HEK293T (cell line): ENCODE measurements at regions of chr11 and their contacts with region 1.

Region 1: DNA sequence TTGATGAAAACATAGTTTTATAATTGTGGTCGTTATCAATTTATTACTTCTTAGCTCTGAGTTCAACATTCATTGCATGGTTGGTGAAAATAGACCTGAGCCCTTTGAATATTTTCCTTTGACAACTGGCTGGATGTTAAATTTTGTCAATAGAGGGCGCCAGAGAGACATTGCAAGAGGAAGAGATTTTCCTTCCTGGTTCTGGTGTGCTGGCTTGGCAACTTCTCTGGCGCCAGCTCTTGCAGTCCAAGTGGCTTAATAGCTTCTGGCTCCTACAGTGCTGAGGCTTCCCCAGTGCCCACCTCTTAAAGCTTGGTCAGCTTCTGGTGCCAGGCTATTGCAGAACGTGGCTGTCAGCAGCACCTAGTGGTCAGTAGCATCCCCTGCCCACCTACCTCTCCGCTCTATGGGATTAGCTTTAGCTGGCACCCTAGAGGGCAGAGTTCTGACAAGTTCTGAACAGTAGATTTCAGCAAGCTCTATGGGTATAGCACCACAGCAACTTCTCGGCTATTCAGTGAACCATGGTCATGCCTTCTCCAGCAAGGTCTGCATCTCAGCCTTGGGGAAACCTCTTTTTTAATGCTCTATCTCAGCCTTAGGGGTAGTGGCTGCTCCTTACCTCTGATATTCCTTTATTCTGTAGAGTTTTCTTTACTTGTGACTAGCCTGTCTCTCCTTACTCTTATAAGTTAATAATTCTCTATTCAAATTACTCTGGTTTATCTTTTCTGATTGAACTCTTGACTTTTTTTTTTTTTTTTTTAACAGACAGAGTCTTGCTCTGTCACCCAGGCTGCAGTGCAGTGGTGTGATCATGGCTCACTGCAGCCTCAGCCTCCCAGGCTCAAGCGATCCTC is 59.4 kb downstream of the ACER3 start:
- DNase-seq: peak; percentile 70

Region 2: GRCh38 chr11:76588455-76589325 is 331.4 kb before region 1 on chr11:
- CTCF ChIA-PET with region 1: no interaction called
- POLR2A ChIA-PET with region 1: no interaction called
- DNase-seq: no peak

Region 3: GRCh38 chr11:76807206-76807875 is 112.8 kb before region 1 on chr11:
- CTCF ChIA-PET with region 1: interaction called, 26 read pairs
- POLR2A ChIA-PET with region 1: no interaction called
- DNase-seq: peak; percentile 86

Region 4: GRCh38 chr11:77046060-77046501 is 126.0 kb after region 1 on chr11:
- CTCF ChIA-PET with region 1: interaction called, 10 read pairs
- POLR2A ChIA-PET with region 1: no interaction called
- DNase-seq: peak; percentile 76